OCI-LY7 (cell line): ENCODE measurements at regions of chr4 and their contacts with region 1.

Region 1: DNA sequence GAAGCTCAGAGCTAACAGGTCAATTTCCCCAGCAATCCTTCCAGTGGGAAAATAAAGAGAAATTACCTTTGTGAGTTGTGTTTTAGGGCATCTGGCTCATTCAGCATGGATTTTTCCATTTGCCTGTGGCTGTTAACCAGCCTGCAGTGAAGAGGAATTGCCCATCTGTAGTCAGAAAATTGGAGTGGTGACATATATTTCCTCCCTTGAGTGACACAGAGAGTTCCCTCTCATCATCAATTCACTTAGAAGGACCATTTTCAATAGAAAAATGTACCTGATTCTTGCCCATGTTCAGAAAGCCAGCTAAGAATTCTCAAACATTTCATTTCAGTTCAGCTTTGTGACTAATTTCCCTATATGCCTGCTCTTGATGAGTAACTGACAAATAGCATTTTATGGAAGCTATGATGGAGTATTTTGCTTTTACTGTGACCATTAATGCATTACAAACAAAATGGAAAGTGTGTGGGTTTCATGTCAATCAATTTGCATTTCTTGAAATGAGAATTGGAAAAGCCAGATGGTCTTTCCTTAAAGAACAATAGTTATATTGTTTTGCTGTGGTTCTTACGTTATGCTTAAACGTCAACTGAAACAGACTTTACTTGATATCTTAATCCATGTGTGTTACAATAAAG is 155.8 kb downstream of the NWD2 start:
- DNase-seq: no peak
- H3K4me3 ChIP-seq: no peak overlapping the region
- H3K27ac ChIP-seq: no peak overlapping the region
- H3K4me1 ChIP-seq: no peaks in the 10 kb centered on the region
- CTCF ChIP-seq: no peak

Region 2: DNA sequence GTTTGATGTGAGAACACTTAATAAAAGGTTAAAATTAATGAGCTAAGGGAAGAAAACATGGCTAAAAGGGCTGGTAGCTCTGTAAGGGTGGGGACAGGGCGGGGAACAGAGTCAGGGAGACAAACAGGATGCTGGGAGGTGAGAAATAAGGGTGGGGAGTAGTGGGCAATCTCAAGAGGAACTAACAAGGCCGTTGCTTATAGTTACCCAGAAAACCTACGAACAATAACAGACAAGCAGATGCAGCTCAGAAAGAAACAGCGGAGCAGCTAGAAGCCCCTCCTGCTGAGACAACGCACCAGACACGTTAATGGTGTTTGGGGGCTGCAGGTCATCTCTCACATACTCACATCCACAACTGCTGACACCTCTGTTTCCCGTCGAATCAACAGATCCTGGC is 1253.9 kb after region 1 on chr4:
- CTCF ChIA-PET with region 1: interaction called, 13 read pairs
- POLR2A ChIA-PET with region 1: no interaction called
- intact Hi-C with region 1: no loop called
- DNase-seq: no peak
- H3K4me3 ChIP-seq: no peak overlapping the region
- H3K27ac ChIP-seq: no peak overlapping the region
- H3K4me1 ChIP-seq: no peaks in the 10 kb centered on the region
- CTCF ChIP-seq: no peak